ENCODE measurements at regions of chr15 and their contacts with region 1.

Region 1: GRCh38 chr15:32663671-32664070 is 22.2 kb downstream of the SCG5 start:
- DNase-seq: no peak
- ATAC-seq: no peak
- H3K4me3 ChIP-seq: no peak overlapping the region
- H3K4me3 Mint-ChIP-seq: no peak overlapping the region
- H3K27ac ChIP-seq: no peak overlapping the region
- H3K27ac Mint-ChIP-seq: no peak overlapping the region
- H3K4me1 ChIP-seq: no peaks in the 10 kb centered on the region
- H3K4me1 Mint-ChIP-seq: peaks cover 5% of the 10 kb centered on the region
- H3K27me3 ChIP-seq: no peaks in the 10 kb centered on the region
- H3K27me3 Mint-ChIP-seq: no peaks in the 10 kb centered on the region
- CTCF ChIP-seq: no peak

Region 2: GRCh38 chr15:32651229-32651837 is 12.3 kb before region 1 on chr15:
- CTCF ChIA-PET with region 1: interaction called, 24 read pairs
- POLR2A ChIA-PET with region 1: no interaction called
- intact Hi-C with region 1: no loop called
- DNase-seq: peak; percentile 4 to 60 (median 33)
- ATAC-seq: peak; percentile 81
- H3K4me3 ChIP-seq: no peak overlapping the region
- H3K4me3 Mint-ChIP-seq: no peak overlapping the region
- H3K27ac ChIP-seq: no peak overlapping the region
- H3K27ac Mint-ChIP-seq: no peak overlapping the region
- H3K4me1 ChIP-seq: no peaks in the 10 kb centered on the region
- H3K4me1 Mint-ChIP-seq: no peaks in the 10 kb centered on the region
- H3K27me3 ChIP-seq: no peaks in the 10 kb centered on the region
- H3K27me3 Mint-ChIP-seq: no peaks in the 10 kb centered on the region
- CTCF ChIP-seq: peak; percentile 71

Measured in CD8-positive, alpha-beta T cell (primary cell).